Right ventricle myocardium inferior (tissue), 1 donor: ENCODE measurements at regions of chr22 and their contacts with region 1.

Region 1: GRCh38 chr22:41532908-41533825 is 11.1 kb downstream of the POLR3H start:
- DNase-seq: peak; percentile 90
- ATAC-seq: peak; percentile 63

Region 2: DNA sequence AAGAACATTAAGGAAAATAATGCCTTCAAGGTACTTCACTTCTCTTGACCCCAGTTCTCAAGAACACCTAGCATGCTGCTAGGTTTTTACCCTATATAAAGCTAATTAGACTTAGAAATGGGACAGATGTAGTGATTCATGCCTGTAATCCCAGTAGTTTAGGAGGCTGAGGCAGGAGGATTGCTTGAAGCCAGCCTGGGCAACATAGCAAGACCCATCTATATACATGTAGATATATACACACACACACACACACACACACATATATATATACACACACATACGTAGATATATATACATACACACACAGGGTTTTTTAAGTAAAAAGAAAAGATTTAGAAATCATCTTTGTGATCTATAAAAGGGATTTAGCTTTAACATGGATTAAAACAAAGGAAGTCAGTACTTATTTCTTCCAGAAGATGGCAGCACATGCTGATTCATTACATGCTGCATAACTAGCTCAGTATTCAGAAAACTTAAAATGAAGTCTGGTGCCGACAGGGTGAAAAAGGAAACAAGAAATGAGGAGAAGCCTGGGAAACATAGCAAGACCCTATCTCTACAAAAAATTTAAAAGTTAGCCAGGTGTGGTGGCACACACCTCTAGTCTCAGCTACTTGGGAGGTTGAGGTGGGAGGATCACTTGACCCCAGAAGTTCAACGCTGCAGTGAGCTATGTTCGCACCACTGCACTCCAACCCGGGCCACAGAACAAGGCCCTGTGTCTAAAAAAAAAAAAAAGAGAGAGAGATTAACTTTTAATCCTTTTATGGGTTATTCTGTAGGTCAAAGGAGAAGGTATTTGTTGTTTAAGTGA is 610.5 kb before region 1 on chr22:
- intact Hi-C with region 1: loop called (anchors 10 kb)
- DNase-seq: no peak
- ATAC-seq: peak; percentile 67

Region 3: GRCh38 chr22:41444360-41445128 is 88.6 kb before region 1 on chr22:
- intact Hi-C with region 1: no loop called
- DNase-seq: peak; percentile 94
- ATAC-seq: peak; percentile 52

Region 4: GRCh38 chr22:41725510-41726110 is 192.4 kb after region 1 on chr22:
- intact Hi-C with region 1: no loop called
- DNase-seq: no peak
- ATAC-seq: no peak